Naive thymus-derived CD4-positive, alpha-beta T cell (primary cell): ENCODE measurements at regions of chr3 and their contacts with region 1.

Region 1: DNA sequence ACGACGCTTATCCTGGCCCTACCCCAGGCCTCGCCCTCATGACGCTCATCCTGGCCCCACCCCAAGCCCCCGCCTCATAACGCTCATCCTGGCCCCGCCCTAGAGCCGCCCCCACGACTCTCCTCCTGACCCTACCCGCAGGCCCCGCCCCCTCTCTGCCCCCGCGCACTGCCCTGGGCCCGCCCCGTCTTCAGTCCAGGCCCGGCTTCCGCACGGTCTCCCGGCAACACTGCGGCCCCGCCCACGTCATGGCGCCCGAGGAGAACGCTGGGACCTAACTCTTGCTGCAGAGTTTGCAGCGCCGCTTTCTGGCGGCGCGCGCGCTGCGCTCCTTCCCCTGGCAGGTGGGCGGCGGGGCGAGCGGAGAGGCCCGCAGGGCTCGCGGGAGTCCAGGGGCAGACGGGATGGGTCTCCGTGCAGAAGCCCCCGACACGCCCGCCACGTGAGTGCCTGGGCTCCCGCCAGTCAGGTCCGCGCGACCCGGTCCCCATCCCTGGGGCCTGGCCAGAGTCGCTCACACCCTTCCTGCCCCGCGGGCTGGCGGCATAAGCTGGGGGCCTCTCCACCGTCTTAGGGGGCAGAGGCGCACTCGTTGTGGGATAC is 52.5 kb upstream of the ROPN1B start:
- DNase-seq: peak in 6 of 9 donors; percentile 91 to 96 (median 94)
- ATAC-seq: peak; percentile 98
- H3K4me3 ChIP-seq: peak overlapping the region; percentile 75
- H3K4me3 Mint-ChIP-seq: peak overlapping the region; percentile 82 to 94 (median 91)
- H3K27ac ChIP-seq: peak overlapping the region; percentile 83
- H3K27ac Mint-ChIP-seq: peak overlapping the region; percentile 86 to 99 (median 94)
- H3K4me1 ChIP-seq: no peaks in the 10 kb centered on the region
- H3K4me1 Mint-ChIP-seq: peaks cover 6 to 18% (median 13%) of the 10 kb centered on the region in 7 donors
- H3K27me3 ChIP-seq: no peaks in the 10 kb centered on the region
- H3K27me3 Mint-ChIP-seq: no peaks in the 10 kb centered on the region

Region 2: GRCh38 chr3:124730129-124730940 is 1186.1 kb before region 1 on chr3 and contains the start of gene UMPS:
- CTCF ChIA-PET with region 1: no interaction called
- POLR2A ChIA-PET with region 1: no interaction called
- intact Hi-C with region 1: loop called in 1 of 2 experiments (anchors 5 kb)
- DNase-seq: peak; percentile 85 to 94 (median 91)
- ATAC-seq: peak; percentile 97
- H3K4me3 ChIP-seq: peak within 1 kb of the TSS; percentile 78
- H3K4me3 Mint-ChIP-seq: peak within 1 kb of the TSS; percentile 93 to 100 (median 98)
- H3K27ac ChIP-seq: peak within 1 kb of the TSS; percentile 77
- H3K27ac Mint-ChIP-seq: peak within 1 kb of the TSS; percentile 96 to 100 (median 98)
- H3K4me1 ChIP-seq: peaks cover 11 to 32% of the 10 kb centered on the region in 2 donors
- H3K4me1 Mint-ChIP-seq: peaks cover 20 to 51% (median 48%) of the 10 kb centered on the region in 7 donors
- H3K27me3 ChIP-seq: peaks cover 0 to 4% of the 10 kb centered on the region in 2 donors
- H3K27me3 Mint-ChIP-seq: peaks cover 9 to 27% (median 19%) of the 10 kb centered on the region in 5 donors
- total RNA-seq, gene UMPS: 13.2 to 34.8 (median 24.8) TPM

Region 3: DNA sequence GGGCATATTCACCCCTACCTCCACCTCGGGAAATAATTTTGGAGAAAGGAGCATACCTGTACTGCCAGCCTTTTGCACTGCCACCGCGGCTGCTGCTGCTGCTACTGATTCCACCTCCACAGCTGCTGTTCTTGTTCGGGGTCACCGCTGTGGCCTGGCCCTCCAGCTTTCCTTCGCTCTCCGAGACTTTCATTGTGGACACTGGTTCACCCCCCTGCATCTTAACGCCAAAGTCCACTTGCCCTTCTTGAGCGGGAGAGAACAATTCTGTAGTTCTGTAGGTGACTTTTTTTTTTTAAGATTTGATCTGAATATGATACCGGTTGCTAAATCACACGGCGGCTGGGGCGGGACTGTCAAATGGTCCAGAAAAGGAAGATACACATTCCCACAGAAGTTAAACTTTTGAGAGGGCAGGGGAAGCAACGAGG is 321.9 kb before region 1 on chr3:
- CTCF ChIA-PET with region 1: no interaction called
- POLR2A ChIA-PET with region 1: no interaction called
- intact Hi-C with region 1: loop called in 1 of 2 experiments (anchors 2 kb)
- DNase-seq: peak in 4 of 9 donors; percentile 10 to 25 (median 16)
- ATAC-seq: no peak
- H3K4me3 ChIP-seq: peak overlapping the region; percentile 82
- H3K4me3 Mint-ChIP-seq: peak overlapping the region; percentile 90 to 99 (median 94)
- H3K27ac ChIP-seq: peak overlapping the region; percentile 90
- H3K27ac Mint-ChIP-seq: peak overlapping the region; percentile 73 to 95 (median 89)
- H3K4me1 ChIP-seq: peaks cover 4 to 15% of the 10 kb centered on the region in 2 donors
- H3K4me1 Mint-ChIP-seq: peaks cover 32 to 50% (median 42%) of the 10 kb centered on the region in 7 donors
- H3K27me3 ChIP-seq: no peaks in the 10 kb centered on the region
- H3K27me3 Mint-ChIP-seq: no peaks in the 10 kb centered on the region

Region 4: DNA sequence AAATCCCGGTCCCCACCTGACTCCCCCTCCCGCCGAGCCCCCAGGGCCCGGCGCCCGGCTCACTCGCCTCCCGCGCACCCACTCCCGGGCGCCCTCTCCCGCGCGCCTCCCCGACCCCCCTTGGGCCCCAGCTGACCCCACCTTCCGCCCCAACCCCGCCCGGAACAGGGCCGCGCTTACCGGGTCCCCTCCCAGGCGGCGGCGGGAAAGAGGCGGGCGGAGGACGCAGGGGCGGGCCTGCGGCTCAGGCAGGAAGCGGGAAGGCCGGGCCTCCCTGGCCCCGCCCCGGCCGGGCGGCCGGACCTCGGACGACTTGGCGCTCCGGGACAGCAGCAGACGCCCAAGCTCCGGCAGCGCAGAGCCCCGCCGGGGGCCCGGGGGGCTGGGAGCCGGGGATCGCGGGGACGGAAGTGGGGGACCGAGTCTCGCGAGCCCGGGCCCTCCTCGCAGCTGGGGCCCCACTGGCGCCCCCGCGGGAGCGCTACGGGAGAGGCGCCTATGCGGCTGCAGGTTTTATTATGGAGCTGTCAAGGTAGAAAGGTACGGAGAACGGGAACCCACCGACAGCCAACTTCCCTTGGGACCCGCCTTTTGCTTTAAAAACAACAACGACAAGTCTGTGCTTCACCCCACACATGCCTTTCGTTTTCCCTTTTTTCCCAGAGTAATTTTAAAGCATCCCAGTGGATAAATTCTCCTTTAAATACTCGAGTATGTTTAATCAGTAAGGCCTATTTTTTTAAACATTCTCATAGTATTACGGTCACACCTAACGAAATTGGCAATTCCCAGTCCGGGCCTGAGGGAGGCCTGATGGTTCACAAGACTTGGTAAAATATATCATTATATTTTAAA is 167.7 kb after region 1 on chr3 and contains the start of gene SLC41A3:
- CTCF ChIA-PET with region 1: no interaction called
- POLR2A ChIA-PET with region 1: interaction called, 3 read pairs
- intact Hi-C with region 1: loop called (anchors 1 kb)
- DNase-seq: peak; percentile 73 to 94 (median 84)
- ATAC-seq: peak; percentile 95
- H3K4me3 ChIP-seq: peak within 1 kb of the TSS; percentile 73
- H3K4me3 Mint-ChIP-seq: peak within 1 kb of the TSS; percentile 82 to 94 (median 91)
- H3K27ac ChIP-seq: peak within 1 kb of the TSS; percentile 91
- H3K27ac Mint-ChIP-seq: peak within 1 kb of the TSS; percentile 87 to 96 (median 91)
- H3K4me1 ChIP-seq: peaks cover 0 to 16% of the 10 kb centered on the region in 2 donors
- H3K4me1 Mint-ChIP-seq: peaks cover 11 to 27% (median 20%) of the 10 kb centered on the region in 7 donors
- H3K27me3 ChIP-seq: no peaks in the 10 kb centered on the region
- H3K27me3 Mint-ChIP-seq: peaks cover 0 to 4% (median 0%) of the 10 kb centered on the region in 5 donors
- total RNA-seq, gene SLC41A3: 24.1 to 33.6 (median 29.6) TPM

Region 5: GRCh38 chr3:126475413-126476114 is 559.1 kb after region 1 on chr3 and contains the start of gene ZXDC:
- CTCF ChIA-PET with region 1: no interaction called
- POLR2A ChIA-PET with region 1: interaction called, 4 read pairs
- intact Hi-C with region 1: loop called (anchors 1 kb)
- DNase-seq: peak; percentile 85 to 95 (median 90)
- ATAC-seq: peak; percentile 89
- H3K4me3 ChIP-seq: peak within 1 kb of the TSS; percentile 89
- H3K4me3 Mint-ChIP-seq: peak within 1 kb of the TSS; percentile 81 to 97 (median 92)
- H3K27ac ChIP-seq: peak within 1 kb of the TSS; percentile 87
- H3K27ac Mint-ChIP-seq: peak within 1 kb of the TSS; percentile 82 to 96 (median 92)
- H3K4me1 ChIP-seq: peaks cover 29 to 34% of the 10 kb centered on the region in 2 donors
- H3K4me1 Mint-ChIP-seq: peaks cover 34 to 52% (median 48%) of the 10 kb centered on the region in 7 donors
- H3K27me3 ChIP-seq: no peaks in the 10 kb centered on the region
- H3K27me3 Mint-ChIP-seq: peaks cover 0 to 4% (median 0%) of the 10 kb centered on the region in 5 donors
- total RNA-seq, gene ZXDC: 33.7 to 71.9 (median 67.6) TPM

Region 6: GRCh38 chr3:127590593-127591477 is 1674.4 kb after region 1 on chr3 and contains the start of gene TPRA1:
- CTCF ChIA-PET with region 1: no interaction called
- POLR2A ChIA-PET with region 1: no interaction called
- intact Hi-C with region 1: loop called (anchors 2 to 5 kb)
- DNase-seq: peak; percentile 58 to 90 (median 85)
- ATAC-seq: peak; percentile 90
- H3K4me3 ChIP-seq: peak within 1 kb of the TSS; percentile 91
- H3K4me3 Mint-ChIP-seq: peak within 1 kb of the TSS; percentile 86 to 99 (median 96)
- H3K27ac ChIP-seq: peak within 1 kb of the TSS; percentile 80
- H3K27ac Mint-ChIP-seq: peak within 1 kb of the TSS; percentile 86 to 96 (median 94)
- H3K4me1 ChIP-seq: peaks cover 11 to 12% of the 10 kb centered on the region in 2 donors
- H3K4me1 Mint-ChIP-seq: peaks cover 14 to 51% (median 43%) of the 10 kb centered on the region in 7 donors
- H3K27me3 ChIP-seq: no peaks in the 10 kb centered on the region
- H3K27me3 Mint-ChIP-seq: no peaks in the 10 kb centered on the region
- total RNA-seq, gene TPRA1: 13.6 to 30.6 (median 24.5) TPM